PC-3 (cell line): ENCODE measurements at regions of chr22 and their contacts with region 1.

Region 1: DNA sequence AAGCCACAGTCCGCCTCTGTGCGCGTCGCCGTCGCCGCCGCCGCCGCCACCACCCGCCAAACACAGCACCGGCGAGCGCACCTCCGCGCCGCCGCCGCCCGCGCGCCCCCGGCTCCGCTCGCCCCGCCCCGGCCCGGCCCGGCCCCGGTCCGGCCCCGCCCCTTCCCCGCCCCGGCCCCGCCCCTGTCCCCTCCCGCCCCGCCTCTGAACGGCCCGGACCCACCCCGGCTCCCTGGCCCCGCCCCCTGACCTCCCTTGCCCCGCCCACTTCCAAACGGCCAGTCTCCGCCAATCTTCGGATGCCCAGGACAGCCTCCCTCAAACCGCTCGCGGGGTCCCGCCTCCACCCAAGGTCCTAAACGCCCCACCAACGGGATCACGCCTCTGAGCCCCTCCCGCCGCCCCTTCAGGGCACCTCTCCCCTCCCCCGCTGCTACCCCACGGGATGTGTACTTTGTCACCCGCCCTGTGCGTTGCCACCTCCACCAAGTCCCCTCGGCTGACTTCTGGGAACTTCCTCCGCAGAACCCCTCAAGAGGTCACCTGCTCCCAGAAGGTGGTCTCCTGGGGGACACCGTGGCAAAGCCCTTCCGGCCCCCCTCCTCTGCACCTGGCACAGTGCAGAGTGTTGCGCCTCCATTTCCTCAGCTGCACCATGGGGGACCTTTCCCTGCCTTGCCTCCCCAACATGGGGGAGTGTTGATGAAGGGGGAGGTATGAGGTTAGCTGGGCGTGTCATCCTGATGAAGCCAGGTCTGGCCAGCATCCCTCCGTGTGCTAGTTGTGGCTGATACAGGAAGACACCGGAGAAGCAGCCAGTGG is at the start of gene KIAA0930:
- DNase-seq: peak; percentile 44
- ATAC-seq: peak; percentile 55
- H3K4me3 ChIP-seq: peak within 1 kb of the TSS; percentile 86
- H3K27ac ChIP-seq: no peak within 1 kb of the TSS
- H3K4me1 ChIP-seq: peaks cover 22% of the 10 kb centered on the region
- H3K27me3 ChIP-seq: no peaks in the 10 kb centered on the region
- CTCF ChIP-seq: no peak
- total RNA-seq, gene KIAA0930: 29.8 and 39.2 TPM in 2 replicates

Region 2: DNA sequence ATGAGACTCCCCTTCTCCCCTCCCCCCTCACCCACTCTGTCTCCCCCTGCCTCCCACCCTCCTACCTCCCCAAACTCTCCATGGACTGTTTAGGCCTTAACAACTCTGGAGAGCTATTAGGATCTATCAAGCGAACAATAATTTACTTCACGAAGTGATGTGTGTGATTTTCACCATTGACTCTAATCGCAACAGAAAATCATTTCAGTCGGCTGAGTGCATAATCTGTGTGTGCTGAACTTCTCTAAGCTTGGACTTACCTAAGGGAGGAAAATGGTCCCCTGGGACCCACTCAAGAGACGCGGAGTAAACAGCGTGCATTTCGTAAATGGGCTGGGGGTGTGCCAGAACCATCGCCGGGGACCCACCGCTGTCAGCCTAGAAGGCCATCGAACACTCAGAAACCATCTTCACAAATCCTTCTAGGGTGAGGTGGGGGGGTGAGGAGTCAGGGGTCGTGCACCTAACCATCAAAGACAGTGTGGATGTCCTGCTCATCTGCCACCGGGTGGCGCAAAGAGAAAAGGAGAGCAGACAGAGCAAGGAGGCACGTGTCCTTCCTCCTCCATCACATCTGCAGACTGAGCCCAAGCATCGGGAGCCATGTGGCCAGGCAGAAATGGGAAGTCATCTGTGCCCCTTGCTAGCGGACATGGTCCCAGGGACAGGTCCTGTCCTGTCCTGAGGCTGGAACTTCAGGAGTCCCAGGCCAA is 139.3 kb before region 1 on chr22:
- CTCF ChIA-PET with region 1: no interaction called
- POLR2A ChIA-PET with region 1: no interaction called
- intact Hi-C with region 1: loop called (anchors 10 kb)
- DNase-seq: peak; percentile 68
- ATAC-seq: peak; percentile 86
- H3K4me3 ChIP-seq: no peak overlapping the region
- H3K27ac ChIP-seq: no peak overlapping the region
- H3K4me1 ChIP-seq: peaks cover 10% of the 10 kb centered on the region
- H3K27me3 ChIP-seq: no peaks in the 10 kb centered on the region
- CTCF ChIP-seq: peak; percentile 81